K562 (cell line): ENCODE measurements at regions of chr5 and their contacts with region 1.

Region 1: DNA sequence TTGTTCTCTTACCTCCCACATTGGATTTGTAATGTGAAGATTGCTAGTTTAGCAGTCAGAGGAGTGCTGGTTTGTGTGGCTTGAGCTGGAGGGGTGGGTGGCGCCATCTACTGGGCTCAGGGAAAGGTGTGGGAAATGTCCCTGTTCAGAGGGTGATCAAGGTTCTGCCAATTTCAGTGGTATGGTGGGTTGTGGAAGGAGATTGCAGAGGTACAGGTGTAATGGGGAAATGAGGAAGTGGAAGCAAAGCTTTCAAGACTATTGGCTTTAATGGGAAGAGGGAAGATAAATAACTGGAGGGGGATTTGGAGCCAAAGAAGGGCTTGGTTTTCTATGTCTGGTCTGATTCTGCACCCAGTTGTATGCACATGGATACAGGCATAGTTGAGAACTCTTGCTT is 76.4 kb downstream of the OSMR start:
- DNase-seq: peak; percentile 69 to 81 (median 73)
- ATAC-seq: peak; percentile 99
- H3K4me3 ChIP-seq: no peak overlapping the region
- H3K27ac ChIP-seq: no peak overlapping the region
- H3K4me1 ChIP-seq: no peaks in the 10 kb centered on the region
- H3K27me3 ChIP-seq: no peaks in the 10 kb centered on the region
- CTCF ChIP-seq: peak; percentile 87 to 97 (median 95)
- EP300 ChIP-seq: no peak
- POLR2A ChIP-seq: no peak
- RAD21 ChIP-seq: peak; percentile 90 to 95

Region 2: DNA sequence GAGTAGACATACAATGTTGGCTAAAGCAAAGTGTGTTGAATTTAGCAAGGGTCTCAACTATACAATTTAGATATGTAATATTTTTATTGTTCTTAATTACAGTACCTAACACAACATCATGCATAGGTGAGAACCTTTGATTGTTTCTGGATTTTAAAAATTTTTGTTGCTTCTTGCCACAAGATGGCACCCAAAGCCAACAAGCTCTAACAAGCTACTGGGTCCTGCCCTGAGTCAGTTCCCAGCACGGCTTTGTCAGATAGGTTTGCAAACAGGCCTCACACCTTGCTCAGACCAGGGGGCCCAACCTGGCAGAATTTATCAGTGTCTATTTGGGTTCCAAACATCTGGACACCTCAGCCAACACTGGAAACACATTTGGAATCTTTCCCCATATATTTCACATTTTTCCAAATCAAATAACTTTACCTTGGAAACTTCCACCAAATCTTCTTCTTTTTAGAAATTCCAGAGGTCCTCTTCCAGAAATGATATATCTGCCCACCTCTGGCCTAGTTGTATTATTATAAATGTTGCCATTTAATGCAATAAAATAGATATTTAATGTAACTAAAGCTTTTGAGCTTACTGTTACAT is 713.3 kb before region 1 on chr5:
- CTCF ChIA-PET with region 1: interaction called, 5 read pairs
- POLR2A ChIA-PET with region 1: no interaction called
- in situ Hi-C with region 1: no loop called
- intact Hi-C with region 1: loop called (anchors 5 kb)
- DNase-seq: peak; percentile 34 to 69 (median 41)
- ATAC-seq: peak; percentile 86
- H3K4me3 ChIP-seq: no peak overlapping the region
- H3K27ac ChIP-seq: no peak overlapping the region
- H3K4me1 ChIP-seq: no peaks in the 10 kb centered on the region
- H3K27me3 ChIP-seq: no peaks in the 10 kb centered on the region
- CTCF ChIP-seq: peak; percentile 64 to 83 (median 70)
- EP300 ChIP-seq: no peak
- POLR2A ChIP-seq: no peak
- RAD21 ChIP-seq: peak; percentile 72 to 81

Region 3: DNA sequence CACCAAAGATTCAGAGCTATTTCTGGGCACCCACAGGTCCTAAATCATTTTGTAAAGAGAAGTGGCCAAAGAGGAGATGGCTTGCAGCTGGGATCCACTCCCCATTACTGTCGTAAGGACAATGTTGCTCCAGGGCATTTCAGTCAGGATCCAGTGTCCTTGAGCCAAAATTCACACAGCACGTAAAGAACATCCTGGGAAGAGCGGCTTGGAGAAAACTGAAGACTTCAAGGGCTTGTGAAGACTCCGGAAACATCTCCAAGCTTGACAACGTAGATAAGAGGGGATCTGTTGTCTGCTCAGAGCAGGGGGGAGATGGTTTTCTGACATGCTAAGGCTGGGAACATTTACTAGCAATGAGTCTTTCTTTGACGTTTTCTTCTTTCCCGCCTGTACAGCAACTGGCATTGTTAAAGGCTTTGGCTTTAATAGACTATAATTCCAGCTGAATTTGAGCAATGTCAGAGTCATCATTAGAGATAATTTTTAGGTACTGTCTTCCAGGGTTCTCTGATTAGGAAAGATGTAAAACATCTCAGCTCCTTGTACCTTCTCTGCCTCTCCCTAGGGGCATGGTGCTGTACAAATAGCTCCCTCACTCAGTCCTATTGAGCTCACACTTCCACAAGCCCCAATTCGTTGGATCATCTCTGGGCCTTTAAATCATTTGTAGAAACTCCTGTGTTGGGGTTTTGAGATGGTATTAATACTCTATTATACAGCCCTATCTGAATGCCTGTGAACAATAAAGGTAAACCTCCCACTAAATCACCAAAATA is 624.2 kb before region 1 on chr5:
- CTCF ChIA-PET with region 1: no interaction called
- POLR2A ChIA-PET with region 1: no interaction called
- in situ Hi-C with region 1: no loop called
- intact Hi-C with region 1: no loop called
- DNase-seq: peak in 2 of 4 experiments; percentile 58 to 63
- ATAC-seq: peak; percentile 86
- H3K4me3 ChIP-seq: no peak overlapping the region
- H3K27ac ChIP-seq: peak overlapping the region; percentile 57
- H3K4me1 ChIP-seq: peaks cover 0 to 5% of the 10 kb centered on the region in 2 experiments; a peak in 2 of 5 replicates
- H3K27me3 ChIP-seq: no peaks in the 10 kb centered on the region
- CTCF ChIP-seq: no peak
- EP300 ChIP-seq: peak; percentile 67
- POLR2A ChIP-seq: no peak
- RAD21 ChIP-seq: no peak

Region 4: GRCh38 chr5:38420691-38421390 is 501.4 kb before region 1 on chr5:
- CTCF ChIA-PET with region 1: interaction called, 11 read pairs
- POLR2A ChIA-PET with region 1: interaction called, 3 read pairs
- in situ Hi-C with region 1: no loop called
- intact Hi-C with region 1: no loop called
- DNase-seq: peak; percentile 46 to 59 (median 57)
- ATAC-seq: peak; percentile 91
- H3K4me3 ChIP-seq: no peak overlapping the region
- H3K27ac ChIP-seq: no peak overlapping the region
- H3K4me1 ChIP-seq: no peaks in the 10 kb centered on the region
- H3K27me3 ChIP-seq: peaks cover 0 to 10% of the 10 kb centered on the region in 2 experiments; a peak in 1 of 5 replicates
- CTCF ChIP-seq: peak; percentile 64 to 82 (median 76)
- EP300 ChIP-seq: no peak
- POLR2A ChIP-seq: no peak
- RAD21 ChIP-seq: peak; percentile 69 to 77

Region 5: GRCh38 chr5:38441453-38442246 is 480.5 kb before region 1 on chr5:
- CTCF ChIA-PET with region 1: interaction called, 5 read pairs
- POLR2A ChIA-PET with region 1: no interaction called
- in situ Hi-C with region 1: no loop called
- intact Hi-C with region 1: loop called (anchors 1 kb)
- DNase-seq: peak; percentile 87 to 92 (median 88)
- ATAC-seq: peak; percentile 100
- H3K4me3 ChIP-seq: no peak overlapping the region
- H3K27ac ChIP-seq: no peak overlapping the region
- H3K4me1 ChIP-seq: peaks cover 0 to 6% of the 10 kb centered on the region in 2 experiments; a peak in 1 of 5 replicates
- H3K27me3 ChIP-seq: peaks cover 9 to 35% of the 10 kb centered on the region in 2 experiments; a peak in 4 of 5 replicates
- CTCF ChIP-seq: peak; percentile 96 to 98 (median 98)
- EP300 ChIP-seq: no peak
- POLR2A ChIP-seq: no peak
- RAD21 ChIP-seq: peak; percentile 98 to 99

Region 6: GRCh38 chr5:38831909-38832308 is 90.3 kb before region 1 on chr5:
- CTCF ChIA-PET with region 1: interaction called, 3 read pairs
- POLR2A ChIA-PET with region 1: no interaction called
- in situ Hi-C with region 1: no loop called
- intact Hi-C with region 1: loop called (anchors 1 kb)
- DNase-seq: peak; percentile 25 to 56 (median 38)
- ATAC-seq: peak; percentile 86
- H3K4me3 ChIP-seq: no peak overlapping the region
- H3K27ac ChIP-seq: no peak overlapping the region
- H3K4me1 ChIP-seq: peaks cover 0 to 5% of the 10 kb centered on the region in 2 experiments; a peak in 1 of 5 replicates
- H3K27me3 ChIP-seq: no peaks in the 10 kb centered on the region
- CTCF ChIP-seq: peak; percentile 61 to 74 (median 73)
- EP300 ChIP-seq: no peak
- POLR2A ChIP-seq: no peak
- RAD21 ChIP-seq: peak in 1 of 2 experiments; percentile 52; a peak in 2 of 4 replicates

Region 7: GRCh38 chr5:38845526-38846378 is 76.4 kb before region 1 on chr5 and contains the start of gene OSMR:
- CTCF ChIA-PET with region 1: no interaction called
- POLR2A ChIA-PET with region 1: no interaction called
- in situ Hi-C with region 1: no loop called
- intact Hi-C with region 1: loop called (anchors 5 kb)
- DNase-seq: peak; percentile 14 to 47 (median 31)
- ATAC-seq: peak; percentile 68
- H3K4me3 ChIP-seq: peak within 1 kb of the TSS; percentile 40
- H3K27ac ChIP-seq: no peak within 1 kb of the TSS; the same call in 2 of the 3 replicates
- H3K4me1 ChIP-seq: peaks cover 0 to 11% of the 10 kb centered on the region in 2 experiments; a peak in 2 of 5 replicates
- H3K27me3 ChIP-seq: peaks cover 18 to 22% of the 10 kb centered on the region in 2 experiments
- CTCF ChIP-seq: no peak
- EP300 ChIP-seq: no peak
- POLR2A ChIP-seq: no peak
- RAD21 ChIP-seq: no peak
- polyA plus RNA-seq, gene OSMR: 0.28 to 0.34 TPM

Region 8: GRCh38 chr5:39283231-39283818 is 361.1 kb after region 1 on chr5:
- CTCF ChIA-PET with region 1: no interaction called
- POLR2A ChIA-PET with region 1: no interaction called
- in situ Hi-C with region 1: no loop called
- intact Hi-C with region 1: loop called (anchors 10 kb)
- DNase-seq: peak; percentile 33 to 84 (median 57)
- ATAC-seq: peak; percentile 100
- H3K4me3 ChIP-seq: no peak overlapping the region
- H3K27ac ChIP-seq: no peak overlapping the region
- H3K4me1 ChIP-seq: no peaks in the 10 kb centered on the region; a peak in 1 of 5 replicates
- H3K27me3 ChIP-seq: no peaks in the 10 kb centered on the region
- CTCF ChIP-seq: peak; percentile 78 to 94 (median 80)
- EP300 ChIP-seq: 0 out of 2 replicates have a peak, but pooled peaks have one; percentile 26
- POLR2A ChIP-seq: no peak
- RAD21 ChIP-seq: peak; percentile 98 to 99

Region 9: DNA sequence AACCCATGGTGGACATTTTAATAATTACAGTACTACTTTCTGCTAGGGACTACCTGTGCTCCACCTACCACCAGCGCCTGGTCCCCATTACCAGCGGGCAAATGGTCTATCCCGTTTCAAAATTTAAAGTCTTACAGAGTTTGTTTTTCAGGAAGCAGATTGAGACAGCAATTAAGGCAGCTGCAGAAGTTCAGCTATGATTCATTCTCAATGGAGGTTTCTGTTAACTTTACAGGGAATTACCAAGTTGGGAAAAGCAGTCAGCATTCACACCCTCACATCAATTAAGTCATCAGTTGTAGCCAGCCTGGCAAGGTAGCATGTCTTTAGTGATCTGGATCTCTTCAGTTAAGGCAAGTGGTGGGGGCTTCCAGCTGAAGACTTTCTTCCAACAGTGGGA is 913.2 kb after region 1 on chr5:
- CTCF ChIA-PET with region 1: no interaction called
- POLR2A ChIA-PET with region 1: no interaction called
- in situ Hi-C with region 1: no loop called
- intact Hi-C with region 1: no loop called
- DNase-seq: no peak
- ATAC-seq: no peak
- H3K4me3 ChIP-seq: no peak overlapping the region
- H3K27ac ChIP-seq: no peak overlapping the region
- H3K4me1 ChIP-seq: no peaks in the 10 kb centered on the region
- H3K27me3 ChIP-seq: no peaks in the 10 kb centered on the region
- CTCF ChIP-seq: no peak
- EP300 ChIP-seq: no peak
- POLR2A ChIP-seq: no peak
- RAD21 ChIP-seq: no peak